Left cardiac atrium (tissue), 4 donors: ENCODE measurements at regions of chr17 and their contacts with region 1.

Region 1: GRCh38 chr17:13576661-13577526 is 24.8 kb downstream of the HS3ST3A1 start:
- DNase-seq: no peak
- ATAC-seq: no peak

Region 2: DNA sequence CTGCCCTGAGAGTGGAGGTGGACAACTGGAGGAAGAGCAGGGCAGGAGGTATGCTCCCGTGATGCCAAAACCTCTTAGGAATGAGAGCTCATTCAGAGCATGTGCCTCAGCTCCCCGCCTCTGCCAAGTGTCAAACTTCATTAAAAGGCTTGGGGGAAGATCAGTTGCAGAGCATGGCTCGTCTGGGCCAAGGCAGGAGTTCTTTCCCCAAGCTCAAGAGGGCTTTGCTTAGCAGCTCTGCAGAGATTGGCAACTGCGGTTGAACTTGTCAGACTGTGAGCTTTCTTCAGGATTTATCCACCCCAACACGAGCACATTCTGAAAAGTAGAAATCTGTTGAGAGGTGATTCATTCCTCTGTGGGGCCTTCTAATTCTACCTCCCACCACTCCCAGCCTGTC is 223.3 kb before region 1 on chr17:
- intact Hi-C with region 1: loop called in 1 of 2 experiments (anchors 10 kb)
- DNase-seq: no peak
- ATAC-seq: peak; percentile 38 to 88

Region 3: DNA sequence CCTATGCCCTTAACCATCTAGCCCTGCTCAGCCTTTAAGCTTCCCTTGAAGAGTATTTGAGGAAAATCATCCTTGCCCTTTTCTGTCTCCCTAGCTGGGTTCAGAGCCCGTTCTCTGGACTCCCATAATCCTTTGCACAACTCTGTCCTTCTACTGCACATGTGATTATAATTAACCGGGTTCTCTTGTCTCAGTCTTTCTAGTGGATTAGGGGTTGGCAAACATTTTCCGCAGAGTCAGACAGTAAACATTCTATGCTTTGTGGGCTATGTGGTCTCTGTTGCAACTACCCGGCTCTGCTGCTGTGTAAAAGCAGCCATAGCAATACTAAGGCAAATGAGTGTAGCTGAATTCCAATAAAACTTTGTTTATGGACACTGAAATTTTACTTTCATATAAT is 579.8 kb after region 1 on chr17:
- intact Hi-C with region 1: no loop called
- DNase-seq: no peak
- ATAC-seq: no peak